ENCODE measurements at regions of chr11 and their contacts with region 1.

Region 1: GRCh38 chr11:75388386-75389275 is 10.7 kb upstream of the RPS3 start:
- DNase-seq: peak; percentile 39 to 87 (median 64)
- ATAC-seq: peak; percentile 93
- H3K4me3 ChIP-seq: no peak overlapping the region
- H3K4me3 Mint-ChIP-seq: no peak overlapping the region
- H3K27ac ChIP-seq: no peak overlapping the region
- H3K27ac Mint-ChIP-seq: no peak overlapping the region
- H3K4me1 ChIP-seq: peaks cover 15% of the 10 kb centered on the region
- H3K4me1 Mint-ChIP-seq: peaks cover 11% of the 10 kb centered on the region
- H3K27me3 ChIP-seq: no peaks in the 10 kb centered on the region
- H3K27me3 Mint-ChIP-seq: no peaks in the 10 kb centered on the region
- CTCF ChIP-seq: peak; percentile 81

Region 2: GRCh38 chr11:75195121-75195551 is 193.5 kb before region 1 on chr11:
- CTCF ChIA-PET with region 1: no interaction called
- POLR2A ChIA-PET with region 1: no interaction called
- intact Hi-C with region 1: no loop called
- DNase-seq: no peak
- ATAC-seq: no peak
- H3K4me3 ChIP-seq: no peak overlapping the region
- H3K4me3 Mint-ChIP-seq: no peak overlapping the region
- H3K27ac ChIP-seq: no peak overlapping the region
- H3K27ac Mint-ChIP-seq: no peak overlapping the region
- H3K4me1 ChIP-seq: no peaks in the 10 kb centered on the region
- H3K4me1 Mint-ChIP-seq: no peaks in the 10 kb centered on the region
- H3K27me3 ChIP-seq: peaks cover 0 to 3% of the 10 kb centered on the region in 2 experiments
- H3K27me3 Mint-ChIP-seq: peaks cover 3% of the 10 kb centered on the region
- CTCF ChIP-seq: no peak

Region 3: GRCh38 chr11:75270896-75271418 is 117.7 kb before region 1 on chr11:
- CTCF ChIA-PET with region 1: interaction called, 650 read pairs
- POLR2A ChIA-PET with region 1: interaction called, 27 read pairs
- intact Hi-C with region 1: loop called in 1 of 2 experiments (anchors 1 kb)
- DNase-seq: peak in 3 of 9 experiments; percentile 24 to 61 (median 44)
- ATAC-seq: no peak
- H3K4me3 ChIP-seq: no peak overlapping the region
- H3K4me3 Mint-ChIP-seq: no peak overlapping the region
- H3K27ac ChIP-seq: no peak overlapping the region
- H3K27ac Mint-ChIP-seq: peak overlapping the region; percentile 98
- H3K4me1 ChIP-seq: peaks cover 52% of the 10 kb centered on the region
- H3K4me1 Mint-ChIP-seq: peaks cover 44% of the 10 kb centered on the region
- H3K27me3 ChIP-seq: no peaks in the 10 kb centered on the region
- H3K27me3 Mint-ChIP-seq: no peaks in the 10 kb centered on the region
- CTCF ChIP-seq: peak; percentile 48

Region 4: DNA sequence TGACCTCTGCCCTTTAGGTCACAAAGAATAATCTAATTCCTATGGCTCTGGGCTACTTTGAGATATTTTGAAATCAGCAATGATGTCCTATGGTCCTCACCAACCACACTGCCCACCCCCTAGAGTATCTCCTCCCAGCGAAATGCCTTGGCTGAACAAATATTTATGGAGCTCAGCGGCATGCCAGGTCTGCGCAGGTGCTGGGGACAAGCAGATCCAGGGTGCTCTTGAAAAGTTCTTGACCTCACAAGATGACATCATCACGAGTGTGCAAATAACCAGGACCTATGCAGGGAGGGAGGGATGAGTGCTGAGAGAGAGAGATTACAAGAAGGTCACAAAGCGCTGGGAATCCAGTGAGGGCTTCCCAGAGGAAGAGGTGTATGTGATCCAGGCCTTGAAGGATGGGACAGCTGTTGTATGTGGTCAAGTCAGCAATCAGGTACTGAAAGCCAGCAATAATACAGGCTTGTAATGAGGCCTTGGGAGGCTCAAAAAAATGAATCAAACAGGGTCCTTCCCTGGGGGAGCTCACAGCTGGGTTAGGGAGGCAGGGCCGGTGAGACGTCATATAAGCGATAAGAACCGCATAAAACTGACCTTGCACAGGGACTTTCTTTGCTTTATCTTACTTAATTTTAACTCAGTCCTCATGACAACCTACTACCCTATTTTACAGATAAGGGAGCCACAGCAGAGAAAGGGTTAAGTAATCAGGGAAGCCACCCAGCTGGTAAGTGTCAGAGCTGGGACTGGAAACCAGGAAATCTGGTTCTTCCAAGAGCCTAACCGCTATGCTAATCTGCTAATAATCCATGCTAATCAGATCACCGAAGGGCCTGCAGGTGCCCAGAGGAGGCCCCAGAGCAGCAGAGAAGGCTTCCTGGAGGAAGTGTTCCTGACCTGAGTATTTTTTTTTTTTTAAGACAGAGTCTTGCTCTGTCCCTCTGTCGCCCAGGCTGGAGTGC is 45.4 kb before region 1 on chr11:
- CTCF ChIA-PET with region 1: interaction called, 122 read pairs
- POLR2A ChIA-PET with region 1: no interaction called
- intact Hi-C with region 1: no loop called
- DNase-seq: no peak
- ATAC-seq: no peak
- H3K4me3 ChIP-seq: no peak overlapping the region
- H3K4me3 Mint-ChIP-seq: no peak overlapping the region
- H3K27ac ChIP-seq: peak overlapping the region in 1 of 2 experiments; percentile 12
- H3K27ac Mint-ChIP-seq: peak overlapping the region; percentile 85
- H3K4me1 ChIP-seq: peaks cover 98% of the 10 kb centered on the region
- H3K4me1 Mint-ChIP-seq: peaks cover 97% of the 10 kb centered on the region
- H3K27me3 ChIP-seq: no peaks in the 10 kb centered on the region
- H3K27me3 Mint-ChIP-seq: no peaks in the 10 kb centered on the region
- CTCF ChIP-seq: no peak

Region 5: GRCh38 chr11:75399344-75400145 is 10.9 kb after region 1 on chr11 and contains the start of gene RPS3:
- CTCF ChIA-PET with region 1: interaction called, 30 read pairs
- POLR2A ChIA-PET with region 1: interaction called, 5 read pairs
- intact Hi-C with region 1: loop called in 1 of 2 experiments (anchors 1 kb)
- DNase-seq: peak; percentile 72 to 93 (median 88)
- ATAC-seq: peak; percentile 88
- H3K4me3 ChIP-seq: peak within 1 kb of the TSS; percentile 69 to 76
- H3K4me3 Mint-ChIP-seq: peak within 1 kb of the TSS; percentile 95
- H3K27ac ChIP-seq: peak within 1 kb of the TSS; percentile 88 to 89
- H3K27ac Mint-ChIP-seq: peak within 1 kb of the TSS; percentile 95
- H3K4me1 ChIP-seq: peaks cover 28% of the 10 kb centered on the region
- H3K4me1 Mint-ChIP-seq: peaks cover 48% of the 10 kb centered on the region
- H3K27me3 ChIP-seq: no peaks in the 10 kb centered on the region
- H3K27me3 Mint-ChIP-seq: no peaks in the 10 kb centered on the region
- CTCF ChIP-seq: no peak
- total RNA-seq, gene RPS3: 4,683 to 5,039 TPM

Region 6: GRCh38 chr11:75445315-75445953 is 56.8 kb after region 1 on chr11:
- CTCF ChIA-PET with region 1: interaction called, 25 read pairs
- POLR2A ChIA-PET with region 1: no interaction called
- intact Hi-C with region 1: loop called (anchors 1 kb)
- DNase-seq: peak; percentile 46 to 85 (median 74)
- ATAC-seq: peak; percentile 98
- H3K4me3 ChIP-seq: no peak overlapping the region
- H3K4me3 Mint-ChIP-seq: no peak overlapping the region
- H3K27ac ChIP-seq: no peak overlapping the region
- H3K27ac Mint-ChIP-seq: no peak overlapping the region
- H3K4me1 ChIP-seq: no peaks in the 10 kb centered on the region
- H3K4me1 Mint-ChIP-seq: no peaks in the 10 kb centered on the region
- H3K27me3 ChIP-seq: no peaks in the 10 kb centered on the region
- H3K27me3 Mint-ChIP-seq: no peaks in the 10 kb centered on the region
- CTCF ChIP-seq: peak; percentile 96

Region 7: DNA sequence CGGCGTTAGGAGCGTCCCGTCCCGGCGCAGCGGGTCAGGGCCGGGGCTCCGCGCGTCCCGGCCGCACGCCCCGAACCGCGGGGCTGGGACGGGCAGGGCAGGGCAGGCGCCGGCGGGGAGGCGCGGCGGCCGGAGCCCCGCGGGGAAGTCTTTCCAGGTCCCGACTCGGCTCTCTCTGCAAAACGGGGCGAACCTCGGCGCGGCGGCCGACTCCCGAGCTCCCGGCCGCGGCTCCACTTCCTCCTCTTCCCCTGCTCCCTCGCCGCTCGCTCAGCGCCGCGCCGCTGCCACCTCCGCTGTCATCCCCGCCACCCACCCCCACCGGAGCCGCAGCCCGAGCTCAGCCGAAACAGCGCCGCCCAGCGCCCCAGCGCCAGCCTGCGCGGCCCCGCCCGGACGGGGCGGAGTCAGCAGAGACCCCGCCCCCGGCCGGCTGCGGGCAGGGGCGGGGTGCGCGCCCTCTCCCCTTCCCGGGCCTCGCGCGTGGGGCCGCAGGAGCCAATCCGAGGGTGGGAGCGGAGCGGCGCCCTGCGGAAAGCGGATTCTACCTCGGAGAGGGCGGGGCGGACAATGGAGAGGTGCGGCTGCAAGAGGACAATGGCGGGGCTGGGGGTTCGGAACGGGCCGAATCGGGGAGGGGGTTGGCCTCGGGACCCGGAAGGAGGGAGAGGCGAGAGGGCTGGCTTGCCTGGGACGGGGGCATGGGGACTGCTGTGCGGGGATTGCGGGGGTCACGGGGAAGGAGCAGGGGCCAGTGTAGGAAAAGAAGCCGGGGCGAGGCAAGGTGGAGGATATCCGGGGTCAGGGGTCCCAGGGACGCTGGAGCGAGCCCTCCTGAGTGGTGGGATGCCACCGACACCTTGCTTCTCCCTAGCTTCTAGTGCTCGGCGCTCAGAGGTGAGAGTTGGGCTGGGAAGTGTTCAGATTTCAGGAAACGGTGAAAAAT is 137.2 kb after region 1 on chr11 and contains the start of gene GDPD5:
- CTCF ChIA-PET with region 1: interaction called, 134 read pairs
- POLR2A ChIA-PET with region 1: interaction called, 4 read pairs
- intact Hi-C with region 1: no loop called
- DNase-seq: peak; percentile 63 to 93 (median 84)
- ATAC-seq: peak; percentile 97
- H3K4me3 ChIP-seq: peak within 1 kb of the TSS; percentile 66 to 78
- H3K4me3 Mint-ChIP-seq: peak within 1 kb of the TSS; percentile 89
- H3K27ac ChIP-seq: no peak within 1 kb of the TSS
- H3K27ac Mint-ChIP-seq: peak within 1 kb of the TSS; percentile 46
- H3K4me1 ChIP-seq: peaks cover 12% of the 10 kb centered on the region
- H3K4me1 Mint-ChIP-seq: peaks cover 26% of the 10 kb centered on the region
- H3K27me3 ChIP-seq: peaks cover 0 to 4% of the 10 kb centered on the region in 2 experiments
- H3K27me3 Mint-ChIP-seq: no peaks in the 10 kb centered on the region
- CTCF ChIP-seq: peak; percentile 39
- total RNA-seq, gene GDPD5: 15.9 to 18.3 TPM

Region 8: GRCh38 chr11:75867775-75868374 is 479.2 kb after region 1 on chr11:
- CTCF ChIA-PET with region 1: no interaction called
- POLR2A ChIA-PET with region 1: no interaction called
- intact Hi-C with region 1: loop called in 1 of 2 experiments (anchors 5 kb)
- DNase-seq: peak in 7 of 9 experiments; percentile 24 to 74 (median 53)
- ATAC-seq: peak; percentile 61
- H3K4me3 ChIP-seq: no peak overlapping the region
- H3K4me3 Mint-ChIP-seq: no peak overlapping the region
- H3K27ac ChIP-seq: no peak overlapping the region
- H3K27ac Mint-ChIP-seq: no peak overlapping the region
- H3K4me1 ChIP-seq: no peaks in the 10 kb centered on the region
- H3K4me1 Mint-ChIP-seq: peaks cover 2% of the 10 kb centered on the region
- H3K27me3 ChIP-seq: no peaks in the 10 kb centered on the region
- H3K27me3 Mint-ChIP-seq: no peaks in the 10 kb centered on the region
- CTCF ChIP-seq: peak; percentile 90